ENCODE measurements at regions of chr3 and their contacts with region 1.

Region 1: DNA sequence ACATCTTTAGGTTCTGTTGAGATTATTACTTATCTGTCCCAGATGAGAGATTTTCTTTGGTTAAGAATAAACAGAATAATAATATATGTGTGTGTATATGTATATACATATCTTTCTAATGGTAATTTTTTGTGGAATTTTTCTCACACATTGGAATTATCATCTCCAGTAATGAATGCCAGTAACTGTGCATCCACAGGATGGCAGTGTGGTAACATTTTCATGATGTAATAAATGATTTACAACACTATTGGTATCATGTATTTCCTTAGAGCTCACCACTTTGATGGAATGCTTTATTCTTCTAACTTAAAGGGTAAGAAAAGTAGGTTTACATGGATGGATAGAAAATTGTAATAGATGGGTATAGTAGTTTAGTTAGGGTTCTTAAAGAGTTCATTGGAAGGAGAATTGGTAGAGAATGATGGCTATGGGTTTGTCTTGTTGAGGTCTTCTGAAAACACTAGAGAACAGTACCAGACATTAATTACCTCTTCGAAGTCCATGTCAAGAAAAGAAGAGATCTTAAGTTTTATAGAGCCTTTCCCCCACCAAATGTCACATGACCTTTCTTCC is 78.1 kb downstream of the STT3B start:
- DNase-seq: peak in 2 of 4 donors; percentile 25 to 42
- ATAC-seq: peak; percentile 83
- H3K4me3 ChIP-seq: no peak overlapping the region
- H3K27ac ChIP-seq: no peak overlapping the region
- H3K4me1 ChIP-seq: peaks cover 0 to 24% of the 10 kb centered on the region in 2 donors
- H3K27me3 ChIP-seq: no peaks in the 10 kb centered on the region
- CTCF ChIP-seq: peak; percentile 33 to 45

Region 2: DNA sequence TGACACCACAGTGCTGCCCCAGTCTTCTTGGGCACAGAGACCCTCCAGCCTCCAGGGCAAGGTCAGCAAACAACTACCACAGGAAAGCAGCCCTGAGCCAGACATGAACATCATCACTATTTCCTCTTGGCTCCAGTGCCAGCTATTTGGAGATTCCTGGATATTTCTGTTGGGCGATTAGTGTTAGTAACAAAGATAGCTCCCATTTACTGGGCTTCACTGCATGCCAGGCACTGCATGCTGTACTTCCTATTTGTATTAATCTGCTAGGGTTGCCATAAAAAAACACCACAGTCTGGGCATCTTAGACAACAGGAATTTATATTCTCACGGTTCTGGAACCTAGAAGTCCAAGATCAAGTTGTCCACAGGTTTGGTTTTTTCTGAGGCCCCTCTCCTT is 333.2 kb before region 1 on chr3:
- intact Hi-C with region 1: no loop called
- DNase-seq: no peak
- ATAC-seq: no peak
- H3K4me3 ChIP-seq: no peak overlapping the region
- H3K27ac ChIP-seq: no peak overlapping the region
- H3K4me1 ChIP-seq: peaks cover 0 to 6% of the 10 kb centered on the region in 2 donors
- H3K27me3 ChIP-seq: no peaks in the 10 kb centered on the region
- CTCF ChIP-seq: no peak

Region 3: GRCh38 chr3:31462050-31462569 is 148.7 kb before region 1 on chr3:
- intact Hi-C with region 1: no loop called
- DNase-seq: peak in 1 of 4 donors; percentile 10
- ATAC-seq: peak; percentile 21
- H3K4me3 ChIP-seq: no peak overlapping the region
- H3K27ac ChIP-seq: no peak overlapping the region
- H3K4me1 ChIP-seq: no peaks in the 10 kb centered on the region
- H3K27me3 ChIP-seq: no peaks in the 10 kb centered on the region
- CTCF ChIP-seq: peak in 1 of 2 donors; percentile 28

Region 4: GRCh38 chr3:31768479-31769123 is 157.8 kb after region 1 on chr3:
- intact Hi-C with region 1: loop called in 1 of 2 experiments (anchors 10 kb)
- DNase-seq: peak in 3 of 4 donors; percentile 39 to 74 (median 62)
- ATAC-seq: peak; percentile 83
- H3K4me3 ChIP-seq: no peak overlapping the region
- H3K27ac ChIP-seq: no peak overlapping the region
- H3K4me1 ChIP-seq: peaks cover 0 to 5% of the 10 kb centered on the region in 2 donors
- H3K27me3 ChIP-seq: no peaks in the 10 kb centered on the region
- CTCF ChIP-seq: peak; percentile 54

Region 5: DNA sequence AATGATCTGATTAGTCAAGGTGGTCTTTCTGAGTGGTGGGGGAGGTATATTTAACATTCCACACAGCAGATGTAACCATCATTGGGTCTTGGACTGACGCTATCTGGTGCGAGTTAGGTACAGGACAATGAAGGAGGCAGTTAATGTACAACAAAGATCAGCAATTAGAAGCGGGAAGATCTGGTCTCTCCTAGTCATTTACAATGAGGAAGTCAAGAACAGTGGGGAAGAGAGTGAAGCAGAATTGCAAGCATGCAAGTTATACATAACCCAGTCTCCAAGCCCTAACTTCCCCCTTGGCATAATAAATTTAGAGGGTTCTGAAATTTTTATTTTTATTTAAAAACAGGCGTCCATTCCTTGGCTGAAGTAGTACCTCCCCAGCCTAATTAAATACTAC is 509.7 kb after region 1 on chr3:
- intact Hi-C with region 1: no loop called
- DNase-seq: no peak
- ATAC-seq: peak; percentile 49
- H3K4me3 ChIP-seq: no peak overlapping the region
- H3K27ac ChIP-seq: no peak overlapping the region
- H3K4me1 ChIP-seq: peaks cover 0 to 12% of the 10 kb centered on the region in 2 donors
- H3K27me3 ChIP-seq: no peaks in the 10 kb centered on the region
- CTCF ChIP-seq: no peak

Measured in left lung (tissue), 14 donors.